ENCODE measurements at regions of chr11 and their contacts with region 1.

Region 1: GRCh38 chr11:63614136-63614664 is at the start of gene PLAAT3:
- DNase-seq: peak; percentile 88
- H3K4me3 Mint-ChIP-seq: peak within 1 kb of the TSS; percentile 92
- H3K27ac Mint-ChIP-seq: peak within 1 kb of the TSS; percentile 92
- H3K4me1 Mint-ChIP-seq: peaks cover 22% of the 10 kb centered on the region
- H3K27me3 Mint-ChIP-seq: no peaks in the 10 kb centered on the region
- CTCF ChIP-seq: no peak
- total RNA-seq, gene PLAAT3: 261 and 297 TPM in 2 replicates

Region 2: DNA sequence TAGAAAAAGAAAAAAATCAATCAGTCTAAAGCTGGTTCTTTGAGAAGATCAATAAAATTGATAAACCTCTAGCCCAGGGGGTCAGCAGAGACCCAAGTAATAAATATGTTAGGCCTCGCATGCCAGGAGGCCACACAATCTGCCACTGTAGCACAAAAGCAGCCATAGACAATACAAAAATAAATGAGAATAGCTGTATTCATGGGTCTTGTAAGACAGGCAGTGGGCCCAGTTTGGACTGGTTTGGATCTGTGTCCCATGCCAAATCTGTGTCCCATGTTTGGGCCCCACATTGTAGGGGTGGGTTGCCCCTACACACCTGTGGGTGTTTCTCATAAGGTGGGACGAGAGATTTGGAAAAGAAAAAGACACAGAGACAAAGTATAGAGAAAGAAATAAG is 84.2 kb before region 1 on chr11:
- CTCF ChIA-PET with region 1: no interaction called
- intact Hi-C with region 1: loop called (anchors 2 kb)
- DNase-seq: no peak
- H3K4me3 Mint-ChIP-seq: peak overlapping the region; percentile 55
- H3K27ac Mint-ChIP-seq: peak overlapping the region; percentile 97
- H3K4me1 Mint-ChIP-seq: peaks cover 66% of the 10 kb centered on the region
- H3K27me3 Mint-ChIP-seq: no peaks in the 10 kb centered on the region
- CTCF ChIP-seq: no peak

Region 3: GRCh38 chr11:63813035-63813562 is 198.9 kb after region 1 on chr11 and contains the start of gene SPINDOC:
- CTCF ChIA-PET with region 1: no interaction called
- intact Hi-C with region 1: no loop called
- DNase-seq: peak; percentile 85
- H3K4me3 Mint-ChIP-seq: peak within 1 kb of the TSS; percentile 76
- H3K27ac Mint-ChIP-seq: peak within 1 kb of the TSS; percentile 68
- H3K4me1 Mint-ChIP-seq: peaks cover 26% of the 10 kb centered on the region
- H3K27me3 Mint-ChIP-seq: no peaks in the 10 kb centered on the region
- CTCF ChIP-seq: no peak
- total RNA-seq, gene SPINDOC: 47.1 and 53.8 TPM in 2 replicates